ENCODE measurements at regions of chr9 and their contacts with region 1.

Region 1: DNA sequence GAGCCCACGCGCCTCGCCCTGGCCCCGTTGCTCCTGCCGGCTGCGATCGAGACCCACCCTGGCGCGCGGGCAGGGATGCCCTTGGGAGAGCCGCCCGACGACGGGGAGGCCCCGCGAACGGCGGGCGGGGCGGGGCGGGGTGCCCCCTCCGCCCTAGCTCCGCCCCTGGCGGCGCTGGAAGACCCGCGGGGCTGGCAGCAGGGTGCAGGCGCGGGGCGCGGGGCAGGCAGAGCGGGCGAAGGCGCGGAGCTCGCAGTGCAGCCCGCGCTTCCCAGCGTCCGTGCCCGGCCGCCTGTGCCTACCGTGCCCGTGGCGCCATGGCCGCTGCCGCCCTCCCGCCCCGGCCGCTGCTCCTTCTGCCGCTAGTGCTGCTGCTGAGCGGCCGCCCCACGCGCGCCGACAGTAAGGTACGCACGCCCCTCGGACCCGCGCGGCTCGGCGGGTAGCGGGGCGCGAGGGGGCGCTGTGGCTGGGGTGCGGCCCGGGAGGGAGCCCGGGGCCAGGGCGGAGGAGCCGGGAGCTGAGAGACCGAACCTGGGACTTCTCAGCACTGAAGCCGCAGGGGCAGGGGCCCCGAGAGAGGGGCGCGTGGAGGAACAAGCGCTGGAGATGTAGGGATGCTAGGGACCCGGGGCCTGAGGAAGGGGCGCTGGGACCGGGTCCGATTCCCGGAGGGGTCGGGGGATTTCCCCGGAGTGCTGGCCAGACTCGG is at the start of gene OLFML2A:
- DNase-seq: peak in 2 of 5 donors; percentile 49 to 58
- ATAC-seq: peak in 3 of 4 donors; percentile 22 to 57 (median 53)
- H3K4me3 ChIP-seq: peak within 1 kb of the TSS; percentile 48 to 90 (median 66)
- H3K27ac ChIP-seq: peak within 1 kb of the TSS in 11 of 12 donors; percentile 6 to 88 (median 74)
- H3K4me1 ChIP-seq: peaks cover 0 to 62% (median 32%) of the 10 kb centered on the region in 12 donors
- H3K27me3 ChIP-seq: peaks cover 0 to 4% (median 0%) of the 10 kb centered on the region in 9 donors
- CTCF ChIP-seq: peak; percentile 25 to 66 (median 50)
- POLR2A ChIP-seq: peak in 1 of 2 donors; percentile 61
- total RNA-seq, gene OLFML2A: 15.5 to 71.1 (median 37.3) TPM

Region 2: DNA sequence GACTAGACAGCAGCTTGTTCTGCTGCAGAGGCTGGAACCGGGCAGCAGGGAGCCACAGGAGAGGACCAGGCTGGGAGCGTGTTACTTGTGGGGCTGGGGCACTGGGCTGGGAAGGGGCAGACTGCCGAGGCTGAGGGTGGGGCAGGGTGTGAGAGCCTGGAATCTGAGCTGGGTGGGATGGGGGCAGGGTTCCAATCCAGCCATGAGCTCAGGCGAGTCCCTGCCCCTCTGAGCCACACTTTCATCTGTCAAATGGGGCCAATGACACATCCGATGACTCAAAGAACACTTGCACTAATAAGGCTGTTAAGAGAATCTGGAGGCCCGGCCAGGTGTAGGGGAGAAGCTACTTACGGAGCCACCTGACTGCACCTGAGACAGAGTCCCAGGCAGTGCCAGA is 57.5 kb after region 1 on chr9:
- intact Hi-C with region 1: loop called in 2 of 10 experiments (anchors 5 kb)
- DNase-seq: peak in 2 of 5 donors; percentile 48 to 70
- ATAC-seq: peak in 3 of 4 donors; percentile 2 to 26 (median 21)
- H3K4me3 ChIP-seq: peak overlapping the region in 1 of 12 donors; percentile 4
- H3K27ac ChIP-seq: peak overlapping the region; percentile 75 to 95 (median 88)
- H3K4me1 ChIP-seq: peaks cover 0 to 53% (median 41%) of the 10 kb centered on the region in 12 donors
- H3K27me3 ChIP-seq: no peaks in the 10 kb centered on the region
- CTCF ChIP-seq: no peak
- POLR2A ChIP-seq: no peak

Region 3: GRCh38 chr9:124839612-124840299 is 62.6 kb after region 1 on chr9:
- intact Hi-C with region 1: loop called in 3 of 10 experiments (anchors 5 kb)
- DNase-seq: peak in 1 of 5 donors; percentile 31
- ATAC-seq: peak in 1 of 4 donors; percentile 24
- H3K4me3 ChIP-seq: no peak overlapping the region
- H3K27ac ChIP-seq: peak overlapping the region in 7 of 12 donors; percentile 5 to 54 (median 45)
- H3K4me1 ChIP-seq: peaks cover 0 to 31% (median 13%) of the 10 kb centered on the region in 12 donors
- H3K27me3 ChIP-seq: no peaks in the 10 kb centered on the region
- CTCF ChIP-seq: peak; percentile 15 to 56 (median 40)
- POLR2A ChIP-seq: no peak